ENCODE measurements at regions of chr5 and their contacts with region 1.

Region 1: DNA sequence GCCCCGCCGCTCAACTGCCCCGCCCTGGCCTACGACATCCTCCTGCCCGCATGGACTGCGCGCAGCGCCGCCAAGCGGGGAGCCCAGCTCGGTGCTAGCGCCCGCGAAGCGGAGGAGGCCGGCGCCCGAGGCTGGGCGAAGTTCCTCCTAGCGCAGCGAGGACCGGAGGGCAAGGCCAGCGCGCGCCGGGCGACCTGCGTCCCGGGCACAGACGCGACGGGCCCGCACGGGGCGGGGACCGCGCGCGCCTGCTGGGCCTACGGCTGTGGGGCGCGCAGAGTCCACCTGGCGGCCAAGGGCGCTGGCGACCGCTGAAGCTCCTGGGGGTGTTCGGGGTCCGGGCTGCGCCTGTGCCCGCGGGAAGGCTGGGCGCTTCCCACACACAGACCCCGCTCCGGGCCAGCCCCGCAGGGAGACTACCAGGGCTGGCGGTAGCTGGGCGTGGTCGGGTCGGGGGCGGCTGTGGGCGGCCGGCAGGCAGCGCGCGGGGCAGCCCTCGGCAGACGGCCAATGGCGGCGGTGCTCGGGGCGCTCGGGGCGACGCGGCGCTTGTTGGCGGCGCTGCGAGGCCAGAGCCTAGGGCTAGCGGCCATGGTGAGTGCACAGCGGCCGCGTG is at the start of gene PCBD2:
- DNase-seq: peak; percentile 88 to 96 (median 91)
- ATAC-seq: peak; percentile 86
- H3K4me3 ChIP-seq: peak within 1 kb of the TSS; percentile 59 to 63
- H3K4me3 Mint-ChIP-seq: peak within 1 kb of the TSS; percentile 98
- H3K27ac ChIP-seq: peak within 1 kb of the TSS; percentile 86 to 89
- H3K27ac Mint-ChIP-seq: peak within 1 kb of the TSS; percentile 99
- H3K4me1 ChIP-seq: peaks cover 4% of the 10 kb centered on the region
- H3K4me1 Mint-ChIP-seq: peaks cover 10% of the 10 kb centered on the region
- H3K27me3 ChIP-seq: no peaks in the 10 kb centered on the region
- H3K27me3 Mint-ChIP-seq: no peaks in the 10 kb centered on the region
- CTCF ChIP-seq: peak; percentile 67
- total RNA-seq, gene PCBD2: 4.2 to 4.4 TPM

Region 2: GRCh38 chr5:134004592-134005375 is 900.0 kb before region 1 on chr5 and contains the start of gene VDAC1:
- CTCF ChIA-PET with region 1: no interaction called
- POLR2A ChIA-PET with region 1: no interaction called
- intact Hi-C with region 1: loop called in 1 of 2 experiments (anchors 10 kb)
- DNase-seq: peak; percentile 68 to 96 (median 86)
- ATAC-seq: peak; percentile 80
- H3K4me3 ChIP-seq: peak within 1 kb of the TSS; percentile 68 to 81
- H3K4me3 Mint-ChIP-seq: peak within 1 kb of the TSS; percentile 95
- H3K27ac ChIP-seq: peak within 1 kb of the TSS; percentile 81 to 98
- H3K27ac Mint-ChIP-seq: peak within 1 kb of the TSS; percentile 97
- H3K4me1 ChIP-seq: peaks cover 30% of the 10 kb centered on the region
- H3K4me1 Mint-ChIP-seq: peaks cover 43% of the 10 kb centered on the region
- H3K27me3 ChIP-seq: no peaks in the 10 kb centered on the region
- H3K27me3 Mint-ChIP-seq: no peaks in the 10 kb centered on the region
- CTCF ChIP-seq: no peak
- total RNA-seq, gene VDAC1: 68.1 to 71.1 TPM

Region 3: DNA sequence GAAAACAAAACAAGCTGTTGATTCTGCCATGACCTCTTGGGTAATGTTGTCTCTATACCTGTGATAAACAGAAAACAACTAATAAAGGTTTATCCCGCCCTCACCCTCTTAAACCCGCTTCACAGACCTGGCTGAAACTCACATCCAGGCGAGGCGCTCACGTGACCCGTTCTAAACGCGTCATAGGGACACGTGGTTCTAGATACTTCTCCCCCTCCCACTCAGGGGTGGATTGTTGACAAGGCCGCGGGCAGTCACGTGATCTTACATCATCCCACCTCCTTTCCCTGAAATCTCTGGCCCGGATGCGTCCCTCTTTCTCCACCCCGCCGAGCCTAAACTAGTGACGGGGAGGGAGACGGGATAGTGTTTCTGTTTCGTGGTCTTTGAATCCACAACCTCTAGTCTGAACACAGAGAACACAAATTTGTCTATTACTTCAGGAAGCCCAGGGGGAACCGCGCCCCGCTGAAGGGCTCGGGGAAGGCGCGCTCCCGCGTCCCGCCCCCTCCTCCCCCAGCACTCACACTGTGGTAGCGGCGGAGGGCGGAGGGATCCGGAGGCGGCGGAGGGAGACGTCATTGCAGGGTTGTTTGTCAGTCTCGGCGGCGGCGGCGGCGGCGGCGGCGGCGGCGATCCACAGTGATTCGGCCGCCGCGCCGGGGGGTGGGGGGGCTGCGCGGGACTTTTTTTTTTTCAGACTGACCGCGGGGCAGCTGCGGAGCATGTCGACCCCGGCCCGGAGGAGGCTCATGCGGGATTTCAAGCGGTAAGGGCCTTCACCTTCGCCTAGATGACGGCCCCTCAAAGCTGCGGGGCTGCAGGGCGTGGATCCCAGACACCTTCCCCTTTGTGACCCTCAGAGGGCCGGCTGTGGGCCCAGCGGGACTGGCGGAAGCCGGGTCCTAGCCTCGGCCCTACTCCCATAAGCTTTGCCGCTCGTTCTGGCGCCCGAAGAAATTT is 533.6 kb before region 1 on chr5 and contains the start of gene UBE2B:
- CTCF ChIA-PET with region 1: no interaction called
- POLR2A ChIA-PET with region 1: interaction called, 5 read pairs
- intact Hi-C with region 1: loop called (anchors 2 to 5 kb)
- DNase-seq: peak; percentile 93 to 100 (median 98)
- ATAC-seq: peak; percentile 72
- H3K4me3 ChIP-seq: peak within 1 kb of the TSS; percentile 88 to 100
- H3K4me3 Mint-ChIP-seq: peak within 1 kb of the TSS; percentile 91
- H3K27ac ChIP-seq: peak within 1 kb of the TSS; percentile 98 to 99
- H3K27ac Mint-ChIP-seq: peak within 1 kb of the TSS; percentile 99
- H3K4me1 ChIP-seq: peaks cover 39% of the 10 kb centered on the region
- H3K4me1 Mint-ChIP-seq: peaks cover 55% of the 10 kb centered on the region
- H3K27me3 ChIP-seq: no peaks in the 10 kb centered on the region
- H3K27me3 Mint-ChIP-seq: no peaks in the 10 kb centered on the region
- CTCF ChIP-seq: no peak
- total RNA-seq, gene UBE2B: 249 to 250 TPM

Region 4: GRCh38 chr5:134648425-134649162 is 256.1 kb before region 1 on chr5 and contains the start of gene SEC24A:
- CTCF ChIA-PET with region 1: no interaction called
- POLR2A ChIA-PET with region 1: no interaction called
- intact Hi-C with region 1: loop called (anchors 2 to 5 kb)
- DNase-seq: peak; percentile 75 to 98 (median 88)
- ATAC-seq: peak; percentile 77
- H3K4me3 ChIP-seq: peak within 1 kb of the TSS; percentile 74 to 98
- H3K4me3 Mint-ChIP-seq: peak within 1 kb of the TSS; percentile 96
- H3K27ac ChIP-seq: peak within 1 kb of the TSS; percentile 83 to 100
- H3K27ac Mint-ChIP-seq: peak within 1 kb of the TSS; percentile 99
- H3K4me1 ChIP-seq: peaks cover 12% of the 10 kb centered on the region
- H3K4me1 Mint-ChIP-seq: peaks cover 30% of the 10 kb centered on the region
- H3K27me3 ChIP-seq: no peaks in the 10 kb centered on the region
- H3K27me3 Mint-ChIP-seq: no peaks in the 10 kb centered on the region
- CTCF ChIP-seq: no peak
- total RNA-seq, gene SEC24A: 14.4 to 14.5 TPM

Region 5: GRCh38 chr5:134758504-134759341 is 146.0 kb before region 1 on chr5 and contains the start of gene DDX46:
- CTCF ChIA-PET with region 1: interaction called, 5 read pairs
- POLR2A ChIA-PET with region 1: interaction called, 8 read pairs
- intact Hi-C with region 1: loop called (anchors 1 kb)
- DNase-seq: peak; percentile 87 to 95 (median 94)
- ATAC-seq: peak; percentile 99
- H3K4me3 ChIP-seq: peak within 1 kb of the TSS; percentile 85 to 88
- H3K4me3 Mint-ChIP-seq: peak within 1 kb of the TSS; percentile 99
- H3K27ac ChIP-seq: peak within 1 kb of the TSS; percentile 76 to 78
- H3K27ac Mint-ChIP-seq: peak within 1 kb of the TSS; percentile 97
- H3K4me1 ChIP-seq: peaks cover 18% of the 10 kb centered on the region
- H3K4me1 Mint-ChIP-seq: peaks cover 36% of the 10 kb centered on the region
- H3K27me3 ChIP-seq: no peaks in the 10 kb centered on the region
- H3K27me3 Mint-ChIP-seq: no peaks in the 10 kb centered on the region
- CTCF ChIP-seq: peak; percentile 75
- total RNA-seq, gene DDX46: 35.1 to 40.4 TPM

Region 6: DNA sequence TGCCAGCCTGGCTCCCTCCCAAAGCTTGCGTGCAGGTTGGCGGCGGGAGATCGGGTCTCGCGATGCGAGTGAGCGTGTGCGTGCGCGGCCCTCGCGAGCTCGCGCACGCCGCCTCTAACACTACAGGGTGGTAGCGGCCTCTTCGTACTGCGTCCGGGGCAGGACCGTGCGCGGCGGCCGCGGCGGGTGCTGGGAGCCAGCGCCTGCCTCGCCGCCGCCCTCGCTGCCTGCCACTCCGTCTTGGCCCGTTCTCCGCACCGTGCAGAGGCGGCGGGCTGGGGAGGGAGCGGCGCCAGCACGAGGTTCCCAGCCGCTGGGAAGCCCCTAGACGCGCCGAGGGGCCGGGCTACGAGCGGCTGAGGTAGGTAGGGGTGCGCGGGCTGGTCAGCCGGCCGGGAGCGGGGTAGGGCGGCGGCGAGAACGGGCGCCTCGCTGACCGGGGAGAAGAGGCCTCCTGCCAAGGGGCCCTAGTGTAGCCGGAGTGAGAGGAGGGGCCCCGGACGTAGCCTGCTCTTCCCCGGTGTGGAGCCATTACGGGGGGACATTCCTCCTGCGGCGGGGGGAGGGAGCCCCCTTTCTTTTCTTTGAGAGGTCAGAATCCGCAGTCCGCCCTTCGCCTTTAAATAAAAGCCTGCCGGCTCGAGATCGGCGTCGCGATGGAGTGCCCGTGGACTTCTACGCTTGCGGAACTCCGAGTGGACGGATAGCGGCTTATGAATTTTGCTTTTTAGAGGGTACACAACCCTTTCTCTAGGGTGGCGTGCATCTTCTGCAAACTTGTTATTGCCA is 58.7 kb before region 1 on chr5 and contains the start of gene C5orf24:
- CTCF ChIA-PET with region 1: interaction called, 3 read pairs
- POLR2A ChIA-PET with region 1: interaction called, 29 read pairs
- intact Hi-C with region 1: loop called (anchors 1 kb)
- DNase-seq: peak; percentile 82 to 98 (median 90)
- ATAC-seq: peak; percentile 92
- H3K4me3 ChIP-seq: peak within 1 kb of the TSS; percentile 85 to 94
- H3K4me3 Mint-ChIP-seq: peak within 1 kb of the TSS; percentile 87
- H3K27ac ChIP-seq: peak within 1 kb of the TSS; percentile 84 to 91
- H3K27ac Mint-ChIP-seq: peak within 1 kb of the TSS; percentile 94
- H3K4me1 ChIP-seq: peaks cover 18% of the 10 kb centered on the region
- H3K4me1 Mint-ChIP-seq: peaks cover 34% of the 10 kb centered on the region
- H3K27me3 ChIP-seq: no peaks in the 10 kb centered on the region
- H3K27me3 Mint-ChIP-seq: no peaks in the 10 kb centered on the region
- CTCF ChIP-seq: no peak
- total RNA-seq, gene C5orf24: 29.9 to 31.0 TPM

Region 7: GRCh38 chr5:134917070-134917815 is 12.5 kb after region 1 on chr5:
- CTCF ChIA-PET with region 1: interaction called, 13 read pairs
- POLR2A ChIA-PET with region 1: no interaction called
- intact Hi-C with region 1: no loop called
- DNase-seq: peak in 1 of 9 experiments; percentile 20
- ATAC-seq: no peak
- H3K4me3 ChIP-seq: no peak overlapping the region
- H3K4me3 Mint-ChIP-seq: no peak overlapping the region
- H3K27ac ChIP-seq: no peak overlapping the region
- H3K27ac Mint-ChIP-seq: no peak overlapping the region
- H3K4me1 ChIP-seq: no peaks in the 10 kb centered on the region
- H3K4me1 Mint-ChIP-seq: no peaks in the 10 kb centered on the region
- H3K27me3 ChIP-seq: no peaks in the 10 kb centered on the region
- H3K27me3 Mint-ChIP-seq: no peaks in the 10 kb centered on the region
- CTCF ChIP-seq: no peak

Region 8: DNA sequence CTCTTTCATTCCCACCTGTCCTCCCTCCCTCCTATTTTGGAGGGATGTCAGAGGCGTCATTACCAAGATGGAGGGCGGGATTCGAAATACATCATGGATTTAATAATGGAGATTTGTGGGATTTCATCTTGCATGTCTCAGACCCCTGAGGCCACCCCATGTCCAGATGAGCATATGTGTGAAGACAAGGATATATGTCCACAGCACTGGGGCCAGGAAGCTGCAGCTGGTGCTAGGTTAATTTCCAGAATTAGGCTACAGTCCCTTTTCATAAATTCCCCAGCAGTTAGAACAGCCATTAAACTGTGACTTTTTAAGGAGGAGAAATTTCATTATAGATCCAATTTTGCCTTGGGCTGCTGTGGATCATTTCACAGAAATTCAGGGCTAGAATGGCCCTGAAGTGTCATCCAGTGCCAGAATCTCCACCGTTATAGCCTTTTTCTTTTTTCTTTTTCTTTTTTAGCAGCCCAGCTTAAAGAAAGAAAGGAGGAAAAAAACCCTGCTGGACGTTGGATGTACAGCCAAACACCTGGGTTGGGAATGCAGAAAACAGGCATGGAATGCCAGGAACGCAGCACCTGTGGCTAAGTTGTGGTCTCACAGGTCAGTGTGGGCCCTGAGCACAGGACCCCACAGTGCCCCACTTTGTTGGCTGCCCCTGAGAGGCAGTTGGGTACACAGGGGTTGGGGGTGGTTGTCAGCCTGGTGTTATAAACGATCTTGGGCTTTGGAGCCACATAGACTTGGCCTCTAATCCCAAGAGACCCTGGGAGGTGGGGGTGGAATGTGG is 724.2 kb after region 1 on chr5:
- CTCF ChIA-PET with region 1: no interaction called
- POLR2A ChIA-PET with region 1: no interaction called
- intact Hi-C with region 1: no loop called
- DNase-seq: no peak
- ATAC-seq: no peak
- H3K4me3 ChIP-seq: no peak overlapping the region
- H3K4me3 Mint-ChIP-seq: no peak overlapping the region
- H3K27ac ChIP-seq: no peak overlapping the region
- H3K27ac Mint-ChIP-seq: no peak overlapping the region
- H3K4me1 ChIP-seq: no peaks in the 10 kb centered on the region
- H3K4me1 Mint-ChIP-seq: no peaks in the 10 kb centered on the region
- H3K27me3 ChIP-seq: no peaks in the 10 kb centered on the region
- H3K27me3 Mint-ChIP-seq: peaks cover 7% of the 10 kb centered on the region
- CTCF ChIP-seq: no peak